ENCODE measurements at regions of chr19 and their contacts with region 1.

Region 1: DNA sequence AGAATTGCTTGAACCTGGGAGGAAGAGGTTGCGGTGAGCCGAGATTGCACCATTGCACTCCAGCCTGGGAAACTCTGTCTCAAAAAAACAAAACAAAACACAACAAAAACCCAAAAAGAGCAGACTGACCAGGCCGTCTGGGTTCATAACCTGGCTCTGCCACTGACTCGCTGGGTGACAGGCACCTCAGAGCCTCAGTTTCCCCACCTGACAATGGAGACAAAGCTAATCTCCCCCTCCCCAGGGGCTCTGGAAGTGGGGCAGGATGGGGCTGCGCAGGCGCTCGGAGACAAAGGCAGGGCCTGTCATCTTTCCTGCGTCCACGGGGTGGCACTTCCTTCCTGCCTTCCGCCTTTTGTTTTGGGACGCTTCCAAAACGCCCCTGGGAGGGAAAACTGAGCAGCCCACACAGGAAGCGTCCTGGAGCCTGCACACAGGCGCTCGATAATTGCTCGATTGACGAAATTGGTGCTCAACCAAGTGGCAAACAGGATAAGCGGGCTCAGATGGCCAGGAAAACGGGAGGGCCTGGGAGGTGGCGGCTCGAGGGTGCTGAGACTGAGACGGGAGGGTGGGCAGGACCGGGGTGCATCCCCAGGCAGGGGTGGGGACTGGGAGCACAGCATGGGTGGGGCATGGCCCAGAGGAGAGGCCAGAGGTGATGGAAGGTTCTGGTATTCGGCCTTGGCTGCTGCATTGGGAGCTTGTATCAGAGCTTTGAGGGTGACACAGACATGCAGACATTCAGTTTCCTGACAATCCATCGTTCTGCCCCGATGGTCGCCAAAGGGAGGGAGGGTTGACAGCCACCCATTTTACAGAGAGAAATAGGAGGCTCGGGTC is 17.8 kb downstream of the SPC24 start:
- DNase-seq: peak; percentile 59
- H3K4me3 Mint-ChIP-seq: peak overlapping the region; percentile 65
- H3K27ac Mint-ChIP-seq: peak overlapping the region; percentile 30
- H3K4me1 Mint-ChIP-seq: peaks cover 18% of the 10 kb centered on the region
- H3K27me3 Mint-ChIP-seq: no peaks in the 10 kb centered on the region

Region 2: GRCh38 chr19:11090054-11090900 is 47.5 kb before region 1 on chr19:
- CTCF ChIA-PET with region 1: no interaction called
- POLR2A ChIA-PET with region 1: no interaction called
- DNase-seq: peak; percentile 98
- H3K4me3 Mint-ChIP-seq: peak overlapping the region; percentile 96
- H3K27ac Mint-ChIP-seq: peak overlapping the region; percentile 99
- H3K4me1 Mint-ChIP-seq: peaks cover 46% of the 10 kb centered on the region
- H3K27me3 Mint-ChIP-seq: no peaks in the 10 kb centered on the region

Region 3: DNA sequence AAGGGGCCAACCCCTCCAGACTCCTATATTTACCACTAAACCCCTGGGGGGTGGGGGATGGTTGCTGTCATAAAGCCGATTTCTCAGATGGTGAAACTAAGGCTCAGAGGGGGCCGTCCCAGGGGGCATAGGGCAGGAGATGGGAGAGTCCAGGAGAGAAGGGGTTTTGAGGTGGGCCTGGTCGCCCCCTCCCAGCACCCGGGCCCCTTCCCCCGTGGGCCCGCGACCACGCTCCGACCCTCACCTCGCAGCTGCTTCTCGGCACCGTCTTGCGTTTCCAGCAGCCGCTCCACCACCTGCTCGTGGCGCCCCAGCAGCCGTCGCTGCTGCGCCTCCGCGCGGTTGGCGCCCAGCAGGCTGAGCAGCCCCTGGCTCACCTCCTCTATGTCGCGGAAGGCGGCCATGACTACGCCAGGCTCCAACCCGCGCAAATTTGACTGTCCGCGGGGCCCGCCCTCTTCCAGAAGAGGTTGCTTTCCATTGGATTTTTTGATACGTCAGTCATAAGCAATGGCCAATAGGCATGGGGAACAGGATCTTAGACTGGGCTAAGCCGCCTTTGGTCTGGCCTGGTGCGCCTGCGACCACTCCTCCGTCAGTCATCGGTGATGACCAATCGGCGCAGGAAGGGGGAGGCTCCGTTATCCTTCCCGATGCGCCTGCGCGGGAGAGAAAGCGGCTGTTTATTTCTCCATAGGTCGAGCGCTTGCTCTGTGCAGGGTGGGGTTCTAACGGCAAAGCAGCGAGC is 17.8 kb after region 1 on chr19 and contains the start of gene SPC24:
- CTCF ChIA-PET with region 1: interaction called, 4 read pairs
- POLR2A ChIA-PET with region 1: interaction called, 15 read pairs
- DNase-seq: peak; percentile 96
- H3K4me3 Mint-ChIP-seq: peak within 1 kb of the TSS; percentile 80
- H3K27ac Mint-ChIP-seq: peak within 1 kb of the TSS; percentile 92
- H3K4me1 Mint-ChIP-seq: peaks cover 31% of the 10 kb centered on the region
- H3K27me3 Mint-ChIP-seq: peaks cover 3% of the 10 kb centered on the region
- total RNA-seq, gene SPC24: 68.2 to 72.1 TPM

Measured in activated CD4-positive, alpha-beta memory T cell treated with anti-CD3 and anti-CD28 coated beads, Interleukin-2, amount 10 ng/mL, durations not matched to agents 7 days and 5 days (primary cell).